ENCODE measurements at regions of chr2 and their contacts with region 1.

Region 1: GRCh38 chr2:85826990-85827878 is 61.6 kb downstream of the ST3GAL5 start:
- DNase-seq: no peak
- H3K4me3 ChIP-seq: no peak overlapping the region
- H3K27ac ChIP-seq: no peak overlapping the region
- H3K27me3 ChIP-seq: peaks cover 5% of the 10 kb centered on the region
- CTCF ChIP-seq: peak; percentile 86

Region 2: DNA sequence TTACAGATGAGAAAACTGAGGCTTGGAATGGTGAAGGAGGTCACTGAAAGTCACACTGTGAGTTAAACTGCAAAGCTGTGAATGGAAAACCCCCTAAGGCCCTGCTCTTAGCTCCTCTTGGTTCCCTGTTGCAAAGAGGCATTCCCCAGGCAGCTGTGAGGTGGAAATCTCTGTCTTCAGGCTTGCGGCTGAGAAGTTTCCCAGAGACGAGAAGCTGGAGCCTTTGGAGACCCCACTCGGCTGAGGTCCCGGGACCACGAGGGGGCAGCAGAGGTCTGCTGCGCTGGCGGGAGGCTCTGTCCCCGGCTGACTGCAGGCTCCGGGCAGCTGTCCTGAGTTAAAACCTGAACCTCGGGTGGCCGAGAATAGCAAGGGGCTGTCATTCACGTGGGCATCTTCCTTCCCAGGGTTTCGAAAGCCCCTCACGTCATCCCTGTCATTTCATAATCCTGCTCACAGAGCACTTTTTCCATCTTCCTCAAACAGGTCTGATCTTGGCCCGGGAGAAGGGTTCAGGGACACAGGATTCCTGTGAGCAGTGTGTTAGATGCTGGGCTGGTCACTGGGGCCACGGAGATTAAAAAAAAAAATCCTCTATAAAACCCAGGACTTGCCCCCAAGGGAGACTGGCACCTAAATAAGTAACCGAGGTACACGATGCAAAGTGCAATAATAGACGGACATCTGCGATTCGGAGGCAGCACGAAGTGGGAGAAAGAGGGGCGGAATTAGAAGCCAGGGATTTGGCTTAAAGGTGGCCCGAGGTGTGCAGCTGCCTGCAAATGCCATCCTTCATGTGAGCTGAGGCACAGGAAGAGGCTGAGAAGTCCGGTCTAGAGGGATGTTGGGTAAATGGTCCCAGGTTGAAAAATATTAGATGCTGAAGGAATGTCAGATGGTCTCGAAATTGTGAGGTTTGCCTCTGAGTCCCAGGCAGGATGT is 98.1 kb before region 1 on chr2:
- CTCF ChIA-PET with region 1: interaction called, 13 read pairs
- POLR2A ChIA-PET with region 1: no interaction called
- DNase-seq: no peak
- H3K4me3 ChIP-seq: no peak overlapping the region
- H3K27ac ChIP-seq: no peak overlapping the region
- H3K27me3 ChIP-seq: peaks cover 10% of the 10 kb centered on the region
- CTCF ChIP-seq: peak; percentile 100

Region 3: GRCh38 chr2:85844486-85844885 is 17.3 kb after region 1 on chr2:
- CTCF ChIA-PET with region 1: interaction called, 14 read pairs
- POLR2A ChIA-PET with region 1: no interaction called
- DNase-seq: no peak
- H3K4me3 ChIP-seq: no peak overlapping the region
- H3K27ac ChIP-seq: no peak overlapping the region
- H3K27me3 ChIP-seq: no peaks in the 10 kb centered on the region
- CTCF ChIP-seq: no peak

Region 4: GRCh38 chr2:85888684-85889626 is 61.7 kb after region 1 on chr2 and contains the start of gene ST3GAL5:
- CTCF ChIA-PET with region 1: interaction called, 13 read pairs
- POLR2A ChIA-PET with region 1: interaction called, 3 read pairs
- DNase-seq: no peak
- H3K4me3 ChIP-seq: peak within 1 kb of the TSS; percentile 73
- H3K27ac ChIP-seq: peak within 1 kb of the TSS; percentile 58
- H3K27me3 ChIP-seq: no peaks in the 10 kb centered on the region
- CTCF ChIP-seq: peak; percentile 75
- polyA plus RNA-seq, gene ST3GAL5: 22.3 and 26.8 TPM in 2 replicates

Region 5: GRCh38 chr2:86072271-86072858 is 245.1 kb after region 1 on chr2:
- CTCF ChIA-PET with region 1: interaction called, 375 read pairs
- POLR2A ChIA-PET with region 1: no interaction called
- DNase-seq: no peak
- H3K4me3 ChIP-seq: no peak overlapping the region
- H3K27ac ChIP-seq: no peak overlapping the region
- H3K27me3 ChIP-seq: no peaks in the 10 kb centered on the region
- CTCF ChIP-seq: no peak

Region 6: GRCh38 chr2:86118133-86118532 is 290.9 kb after region 1 on chr2:
- CTCF ChIA-PET with region 1: interaction called, 12 read pairs
- POLR2A ChIA-PET with region 1: interaction called, 5 read pairs
- DNase-seq: no peak
- H3K4me3 ChIP-seq: no peak overlapping the region
- H3K27ac ChIP-seq: no peak overlapping the region
- H3K27me3 ChIP-seq: no peaks in the 10 kb centered on the region
- CTCF ChIP-seq: no peak

Region 7: DNA sequence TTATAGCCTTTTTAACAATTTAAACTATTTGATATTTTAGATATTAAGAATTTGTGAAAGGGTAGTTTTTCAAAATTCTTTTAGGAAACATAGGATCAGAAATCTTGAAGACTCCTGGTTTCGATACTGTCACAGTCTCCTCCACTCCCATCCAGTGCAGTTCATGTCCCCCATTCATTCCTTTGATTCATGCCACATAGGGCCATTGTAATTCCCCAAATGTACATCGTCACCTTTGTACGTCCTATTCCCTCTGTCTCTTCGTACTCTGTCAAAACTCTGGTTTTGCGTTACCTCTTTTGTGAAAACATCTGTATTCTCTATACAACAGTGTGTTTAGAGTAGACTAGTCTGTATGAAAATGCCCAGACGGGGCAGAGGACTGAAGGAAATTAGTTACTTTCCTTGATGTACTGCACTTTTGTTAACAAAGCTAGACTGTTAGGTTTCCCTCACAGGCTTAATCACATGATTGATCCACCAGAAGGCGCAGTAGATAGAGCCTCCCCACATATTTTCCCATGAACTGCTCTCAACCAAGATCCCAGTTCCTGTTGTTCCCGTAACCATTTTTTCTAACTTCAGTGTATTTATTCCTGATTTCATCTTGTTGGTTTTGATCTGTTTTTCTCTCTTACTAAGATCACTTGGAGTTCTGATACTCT is 374.6 kb after region 1 on chr2:
- CTCF ChIA-PET with region 1: no interaction called
- POLR2A ChIA-PET with region 1: no interaction called
- DNase-seq: no peak
- H3K4me3 ChIP-seq: no peak overlapping the region
- H3K27ac ChIP-seq: no peak overlapping the region
- H3K27me3 ChIP-seq: no peaks in the 10 kb centered on the region
- CTCF ChIP-seq: peak; percentile 25; the same call in 1 of the 2 replicates

Measured in AG04450 (cell line).